ENCODE measurements at regions of chr7 and their contacts with region 1.

Region 1: DNA sequence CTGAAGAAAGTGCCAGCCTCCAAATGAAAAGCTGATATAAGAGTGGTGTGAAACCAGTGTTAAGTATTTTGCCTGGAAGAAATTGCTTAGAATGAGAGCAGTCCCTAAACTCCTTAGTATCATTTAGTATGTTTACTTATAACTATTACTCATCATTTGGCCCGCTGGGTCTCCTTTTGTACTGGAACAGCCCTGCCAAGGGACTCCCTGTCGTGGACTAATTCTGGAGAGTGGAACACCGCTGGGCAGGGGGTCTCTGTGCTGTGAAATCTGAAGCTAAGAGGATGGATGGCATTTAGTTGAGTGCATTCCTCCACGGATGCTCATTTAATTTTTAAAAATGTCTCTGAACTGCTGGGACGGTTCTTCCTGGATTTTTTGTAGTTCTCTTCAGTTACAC is 889.9 kb upstream of the C7orf33 start:
- DNase-seq: no peak
- ATAC-seq: no peak
- H3K4me3 ChIP-seq: no peak overlapping the region
- H3K27ac ChIP-seq: no peak overlapping the region
- H3K4me1 ChIP-seq: no peaks in the 10 kb centered on the region
- H3K27me3 ChIP-seq: no peaks in the 10 kb centered on the region
- CTCF ChIP-seq: no peak
- POLR2A ChIP-seq: no peak

Region 2: GRCh38 chr7:147742301-147742700 is 41.6 kb after region 1 on chr7:
- in situ Hi-C with region 1: no loop called
- intact Hi-C with region 1: no loop called
- DNase-seq: no peak
- ATAC-seq: no peak
- H3K4me3 ChIP-seq: no peak overlapping the region
- H3K27ac ChIP-seq: no peak overlapping the region
- H3K4me1 ChIP-seq: no peaks in the 10 kb centered on the region
- H3K27me3 ChIP-seq: no peaks in the 10 kb centered on the region
- CTCF ChIP-seq: no peak
- POLR2A ChIP-seq: no peak

Region 3: DNA sequence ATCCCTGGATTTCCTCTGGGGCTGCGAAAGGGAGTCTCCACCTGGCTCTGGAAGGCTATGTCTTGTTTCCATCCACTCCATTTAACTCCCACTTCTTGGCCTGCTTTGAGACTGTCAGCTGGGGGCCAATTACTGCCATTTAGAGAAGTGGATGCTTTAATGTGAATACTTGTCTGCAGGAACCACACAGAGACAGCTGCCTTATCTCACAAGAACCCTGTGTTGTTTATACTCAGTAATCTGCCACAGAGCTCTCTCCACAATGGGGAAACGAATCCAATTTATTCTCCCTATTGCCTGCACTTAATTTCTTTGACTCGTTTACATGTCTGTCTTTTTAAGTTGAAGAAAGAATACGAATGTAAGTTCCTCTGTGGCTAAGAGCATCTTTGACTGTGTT is 102.9 kb after region 1 on chr7:
- in situ Hi-C with region 1: loop called in 1 of 4 experiments (anchors 25 kb)
- intact Hi-C with region 1: no loop called
- DNase-seq: no peak
- ATAC-seq: no peak
- H3K4me3 ChIP-seq: no peak overlapping the region
- H3K27ac ChIP-seq: no peak overlapping the region
- H3K4me1 ChIP-seq: no peaks in the 10 kb centered on the region
- H3K27me3 ChIP-seq: no peaks in the 10 kb centered on the region
- CTCF ChIP-seq: no peak
- POLR2A ChIP-seq: no peak

Measured in gastrocnemius medialis (tissue), 4 donors.